Activated CD4-positive, alpha-beta T cell treated with anti-CD3 and anti-CD28 coated beads for 36 hours (primary cell): ENCODE measurements at regions of chr5 and their contacts with region 1.

Region 1: GRCh38 chr5:54310433-54311175 is at the start of gene ARL15:
- DNase-seq: peak; percentile 99
- ATAC-seq: peak; percentile 98
- H3K4me3 Mint-ChIP-seq: peak within 1 kb of the TSS; percentile 83
- H3K27ac Mint-ChIP-seq: peak within 1 kb of the TSS; percentile 81
- H3K4me1 Mint-ChIP-seq: peaks cover 27% of the 10 kb centered on the region
- H3K27me3 Mint-ChIP-seq: peaks cover 8% of the 10 kb centered on the region
- total RNA-seq, gene ARL15: 5.4 to 6.7 TPM

Region 2: DNA sequence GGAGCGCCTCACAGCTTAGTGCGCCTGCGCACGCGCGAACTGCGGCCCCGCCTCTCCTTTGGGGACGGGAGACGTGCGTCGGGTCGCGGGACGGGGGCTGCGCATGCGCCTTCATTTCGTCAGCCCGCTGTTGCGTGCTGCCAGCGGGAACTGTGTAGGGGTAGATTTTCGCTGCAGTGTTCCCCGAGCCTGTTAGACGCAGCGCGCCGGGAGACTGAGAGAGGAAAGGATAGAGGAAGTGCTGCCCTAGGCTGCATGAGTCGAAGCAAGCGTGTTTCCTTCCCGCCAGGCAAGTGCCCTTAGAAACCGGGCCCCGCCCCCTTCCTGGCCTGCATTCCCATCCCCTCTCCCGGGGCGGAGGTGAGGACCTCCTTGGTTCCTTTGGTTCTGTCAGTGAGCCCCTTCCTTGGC is 1510.6 kb before region 1 on chr5:
- CTCF ChIA-PET with region 1: no interaction called
- POLR2A ChIA-PET with region 1: no interaction called
- intact Hi-C with region 1: loop called in 1 of 2 experiments (anchors 2 kb)
- DNase-seq: peak; percentile 98
- ATAC-seq: peak; percentile 91
- H3K4me3 Mint-ChIP-seq: peak overlapping the region; percentile 91
- H3K27ac Mint-ChIP-seq: peak overlapping the region; percentile 97
- H3K4me1 Mint-ChIP-seq: peaks cover 47% of the 10 kb centered on the region
- H3K27me3 Mint-ChIP-seq: no peaks in the 10 kb centered on the region

Region 3: GRCh38 chr5:53481887-53482716 is 828.5 kb before region 1 on chr5:
- CTCF ChIA-PET with region 1: no interaction called
- POLR2A ChIA-PET with region 1: no interaction called
- intact Hi-C with region 1: loop called in 1 of 2 experiments (anchors 5 kb)
- DNase-seq: peak; percentile 83
- ATAC-seq: peak; percentile 70
- H3K4me3 Mint-ChIP-seq: peak overlapping the region; percentile 79
- H3K27ac Mint-ChIP-seq: peak overlapping the region; percentile 80
- H3K4me1 Mint-ChIP-seq: peaks cover 40% of the 10 kb centered on the region
- H3K27me3 Mint-ChIP-seq: peaks cover 40% of the 10 kb centered on the region

Region 4: GRCh38 chr5:54415896-54416601 is 105.4 kb after region 1 on chr5:
- CTCF ChIA-PET with region 1: interaction called, 7 read pairs
- POLR2A ChIA-PET with region 1: no interaction called
- intact Hi-C with region 1: loop called in 1 of 2 experiments (anchors 5 kb)
- DNase-seq: no peak
- ATAC-seq: no peak
- H3K4me3 Mint-ChIP-seq: no peak overlapping the region
- H3K27ac Mint-ChIP-seq: no peak overlapping the region
- H3K4me1 Mint-ChIP-seq: no peaks in the 10 kb centered on the region
- H3K27me3 Mint-ChIP-seq: peaks cover 6% of the 10 kb centered on the region

Region 5: GRCh38 chr5:54844905-54845566 is 534.4 kb after region 1 on chr5:
- CTCF ChIA-PET with region 1: no interaction called
- POLR2A ChIA-PET with region 1: no interaction called
- intact Hi-C with region 1: loop called in 1 of 2 experiments (anchors 10 kb)
- DNase-seq: no peak
- ATAC-seq: no peak
- H3K4me3 Mint-ChIP-seq: no peak overlapping the region
- H3K27ac Mint-ChIP-seq: no peak overlapping the region
- H3K4me1 Mint-ChIP-seq: peaks cover 3% of the 10 kb centered on the region
- H3K27me3 Mint-ChIP-seq: peaks cover 5% of the 10 kb centered on the region

Region 6: DNA sequence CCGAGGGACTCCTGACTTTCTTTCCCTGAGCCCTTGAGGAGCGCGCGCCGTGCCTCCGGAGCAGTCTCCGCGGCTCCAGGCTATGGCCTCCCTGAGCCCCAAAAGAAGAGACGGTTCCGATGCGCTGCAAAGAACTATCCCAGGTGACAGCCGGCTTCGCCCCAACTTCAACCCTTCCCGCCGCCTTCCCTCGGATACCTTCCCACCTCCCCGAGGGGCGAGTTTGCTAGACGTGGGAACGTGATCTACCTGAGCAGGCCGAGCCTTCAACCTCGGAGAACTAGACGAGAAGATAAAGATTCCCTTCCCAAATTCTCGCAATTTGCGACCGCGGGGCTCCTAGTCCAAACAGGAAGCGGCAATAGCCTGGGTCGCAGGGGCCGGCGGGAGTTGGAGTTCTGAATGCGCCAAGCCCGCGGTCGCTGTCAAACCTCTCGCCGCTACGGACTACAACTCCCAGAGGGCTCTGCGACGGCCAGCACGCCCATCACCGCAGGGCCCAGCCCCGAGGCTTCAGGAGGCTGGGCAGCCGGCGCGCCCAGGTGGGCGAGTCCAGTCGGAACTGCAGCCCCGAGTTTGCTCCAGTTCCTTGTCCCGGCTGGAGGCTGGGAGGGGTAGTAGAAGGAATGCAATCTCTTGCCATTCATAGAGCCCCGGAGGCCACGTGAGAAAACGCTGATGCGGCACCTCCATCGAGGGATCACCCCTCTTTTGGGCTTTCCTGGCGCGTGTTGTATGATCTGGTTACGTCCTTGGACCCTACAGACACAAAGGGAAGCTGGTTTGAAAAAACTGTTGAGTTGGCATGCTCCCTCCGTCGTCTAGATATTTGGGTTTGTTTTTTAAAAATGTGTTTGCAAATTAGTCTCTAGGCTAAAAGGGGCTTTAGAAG is 1401.6 kb after region 1 on chr5 and contains the start of gene SLC38A9:
- CTCF ChIA-PET with region 1: no interaction called
- POLR2A ChIA-PET with region 1: no interaction called
- intact Hi-C with region 1: loop called in 1 of 2 experiments (anchors 5 kb)
- DNase-seq: peak; percentile 97
- ATAC-seq: peak; percentile 100
- H3K4me3 Mint-ChIP-seq: peak within 1 kb of the TSS; percentile 93
- H3K27ac Mint-ChIP-seq: peak within 1 kb of the TSS; percentile 92
- H3K4me1 Mint-ChIP-seq: peaks cover 24% of the 10 kb centered on the region
- H3K27me3 Mint-ChIP-seq: no peaks in the 10 kb centered on the region
- total RNA-seq, gene SLC38A9: 12.9 to 16.2 TPM